Cardiac septum (tissue), 1 donor: ENCODE measurements at regions of chr9 and their contacts with region 1.

Region 1: GRCh38 chr9:26012797-26013594 is 334.8 kb upstream of the TUSC1 start:
- DNase-seq: no peak

Region 2: DNA sequence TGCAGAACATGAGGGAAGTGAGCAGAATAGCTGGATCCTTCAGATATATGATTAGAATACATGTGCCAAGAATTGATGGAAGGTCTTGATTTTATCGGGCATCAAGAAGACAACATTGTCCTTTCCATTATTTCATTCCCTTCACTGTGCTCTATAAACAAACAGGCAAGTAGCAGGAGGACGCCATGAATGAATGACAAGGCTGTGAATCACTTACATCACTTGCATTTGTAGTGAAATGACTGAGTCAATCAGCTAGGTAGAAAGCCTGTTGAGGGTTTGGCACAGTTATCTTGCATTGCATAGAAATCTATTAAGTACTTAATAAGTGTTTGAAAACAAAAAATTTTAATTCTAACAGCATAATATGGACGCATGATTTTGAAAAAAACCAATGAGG is 918.5 kb before region 1 on chr9:
- intact Hi-C with region 1: loop called (anchors 10 kb)
- DNase-seq: no peak

Region 3: GRCh38 chr9:25960178-25960577 is 52.8 kb before region 1 on chr9:
- intact Hi-C with region 1: no loop called
- DNase-seq: no peak